Gastrocnemius medialis (tissue), 4 donors: ENCODE measurements at regions of chr10 and their contacts with region 1.

Region 1: GRCh38 chr10:102114861-102115618 is 5.1 kb downstream of the LDB1 start:
- DNase-seq: peak; percentile 79 to 81
- ATAC-seq: peak; percentile 61 to 73
- H3K4me3 ChIP-seq: peak overlapping the region; percentile 57 to 69 (median 64)
- H3K27ac ChIP-seq: peak overlapping the region; percentile 76 to 100 (median 94)
- H3K4me1 ChIP-seq: peaks cover 68% of the 10 kb centered on the region in 2 donors
- H3K27me3 ChIP-seq: no peaks in the 10 kb centered on the region
- CTCF ChIP-seq: no peak
- POLR2A ChIP-seq: peak; percentile 41 to 47

Region 2: GRCh38 chr10:102020938-102021337 is 94.1 kb before region 1 on chr10:
- in situ Hi-C with region 1: no loop called
- intact Hi-C with region 1: no loop called
- DNase-seq: no peak
- ATAC-seq: no peak
- H3K4me3 ChIP-seq: no peak overlapping the region
- H3K27ac ChIP-seq: no peak overlapping the region
- H3K4me1 ChIP-seq: peaks cover 12 to 13% of the 10 kb centered on the region in 2 donors
- H3K27me3 ChIP-seq: no peaks in the 10 kb centered on the region
- CTCF ChIP-seq: no peak
- POLR2A ChIP-seq: no peak

Region 3: DNA sequence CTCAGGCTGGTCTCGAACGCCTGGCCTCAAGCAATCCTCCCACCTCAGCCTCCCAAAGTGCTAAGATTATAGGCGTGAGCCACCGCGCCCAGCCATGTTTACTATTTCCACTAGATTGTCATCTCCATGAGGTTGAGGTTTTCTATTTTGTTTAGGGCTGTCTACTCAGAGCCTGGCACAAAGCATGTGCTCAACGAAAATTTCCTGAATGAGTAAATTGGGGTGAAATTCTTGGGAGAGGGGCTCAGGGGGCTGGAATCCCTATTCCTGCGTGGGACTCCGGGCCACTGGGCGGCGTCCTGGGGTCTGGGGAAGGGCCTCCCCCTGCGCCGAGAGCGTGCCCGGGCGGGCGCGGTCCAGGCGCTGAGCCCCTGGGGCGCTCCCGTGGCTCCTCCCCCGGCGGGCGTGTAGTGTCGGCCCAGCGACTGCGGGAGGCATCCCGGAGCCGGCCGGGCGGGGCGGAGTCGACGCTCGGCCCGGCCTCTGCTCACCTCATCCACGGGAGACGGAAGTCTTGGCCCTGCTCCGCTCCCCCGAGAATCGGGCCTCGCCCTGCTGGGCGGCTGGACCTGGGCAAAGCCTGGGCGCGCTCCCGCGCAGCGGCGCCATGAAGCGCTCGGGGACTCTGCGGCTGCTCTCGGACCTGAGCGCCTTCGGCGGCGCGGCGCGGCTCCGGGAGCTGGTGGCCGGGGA is 50.0 kb before region 1 on chr10 and contains the start of gene HPS6:
- in situ Hi-C with region 1: no loop called
- intact Hi-C with region 1: loop called (anchors 1 kb)
- DNase-seq: peak; percentile 79 to 85
- ATAC-seq: peak; percentile 91 to 94
- H3K4me3 ChIP-seq: peak within 1 kb of the TSS; percentile 66 to 95 (median 85)
- H3K27ac ChIP-seq: peak within 1 kb of the TSS; percentile 81 to 96 (median 96)
- H3K4me1 ChIP-seq: peaks cover 31 to 39% of the 10 kb centered on the region in 2 donors
- H3K27me3 ChIP-seq: no peaks in the 10 kb centered on the region
- CTCF ChIP-seq: peak in 2 of 5 experiments; percentile 17 to 21
- POLR2A ChIP-seq: peak; percentile 62 to 77
- total RNA-seq, gene HPS6: 12.7 to 21.8 (median 19.4) TPM

Region 4: DNA sequence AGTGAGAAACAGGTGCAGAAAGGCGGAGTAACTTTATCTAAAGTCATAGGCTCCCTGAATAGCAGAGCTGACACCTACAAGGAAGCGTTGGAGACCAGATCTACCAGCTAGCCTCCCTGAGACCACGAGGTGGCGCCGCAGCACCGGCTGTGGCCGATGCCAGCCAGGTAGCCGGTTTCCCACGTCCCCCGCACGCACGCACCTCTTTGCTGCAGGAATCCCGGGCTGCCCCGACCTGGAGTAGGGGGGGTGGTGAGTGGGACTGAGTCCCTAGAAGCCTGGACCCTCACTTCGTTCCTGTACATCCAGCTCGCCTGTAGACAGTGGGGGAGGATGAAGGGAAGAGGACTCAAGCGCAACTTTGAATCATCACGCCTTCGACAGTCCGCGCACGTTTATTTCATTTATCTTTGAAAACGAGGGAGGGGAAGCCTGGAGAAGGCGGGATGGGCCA is 114.8 kb after region 1 on chr10:
- in situ Hi-C with region 1: no loop called
- intact Hi-C with region 1: no loop called
- DNase-seq: peak; percentile 61 to 81
- ATAC-seq: peak; percentile 55 to 64
- H3K4me3 ChIP-seq: peak overlapping the region; percentile 41 to 58 (median 52)
- H3K27ac ChIP-seq: peak overlapping the region; percentile 62 to 72 (median 70)
- H3K4me1 ChIP-seq: peaks cover 36 to 42% of the 10 kb centered on the region in 2 donors
- H3K27me3 ChIP-seq: peaks cover 0 to 4% (median 0%) of the 10 kb centered on the region in 3 donors
- CTCF ChIP-seq: peak; percentile 97 to 99 (median 97)
- POLR2A ChIP-seq: no peak